ENCODE measurements at regions of chr11 and their contacts with region 1.

Region 1: DNA sequence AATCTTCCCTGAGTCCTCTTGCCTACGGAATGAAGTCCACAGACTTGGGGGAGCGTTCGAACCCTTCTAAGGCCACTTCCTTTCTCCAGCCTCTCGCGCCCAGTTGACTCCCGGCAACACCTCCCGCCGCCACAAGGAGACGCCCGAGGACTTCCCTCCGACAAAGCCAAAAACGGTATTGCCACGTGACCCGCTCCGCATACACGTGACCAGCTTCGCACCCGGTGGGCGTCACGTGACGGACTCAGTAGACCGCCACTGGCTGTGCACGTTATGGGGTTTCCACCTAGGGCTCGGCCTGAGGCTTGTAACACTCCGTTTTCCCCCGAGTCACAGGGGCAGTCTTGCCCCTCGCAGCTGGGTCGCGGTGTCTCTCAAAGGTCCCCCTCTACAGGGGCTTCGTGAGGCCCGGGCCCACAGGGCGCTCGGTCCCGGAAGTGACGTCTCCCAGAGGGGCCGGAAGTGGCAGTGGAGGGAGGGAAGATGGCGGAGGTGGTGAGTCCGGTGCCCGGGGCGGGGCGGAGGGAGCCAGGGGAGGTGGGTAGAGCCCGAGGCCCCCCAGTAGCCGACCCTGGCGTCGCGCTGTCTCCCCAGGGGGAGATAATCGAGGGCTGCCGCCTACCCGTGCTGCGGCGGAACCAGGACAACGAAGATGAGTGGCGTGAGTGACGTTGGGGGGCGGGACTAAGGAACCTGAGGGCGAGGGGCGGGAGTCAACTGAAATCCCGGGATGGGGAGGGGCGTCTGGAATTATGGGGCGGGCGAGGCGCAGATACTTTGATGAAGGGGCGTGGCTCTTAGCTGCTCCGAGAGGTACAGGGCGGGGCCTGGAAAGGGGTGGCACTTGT is at the start of gene KAT5:
- DNase-seq: peak; percentile 97 to 100 (median 99)

Region 2: GRCh38 chr11:65625628-65626342 is 86.2 kb before region 1 on chr11:
- intact Hi-C with region 1: loop called (anchors 5 kb)
- DNase-seq: peak in 8 of 10 donors; percentile 63 to 96 (median 76)

Region 3: DNA sequence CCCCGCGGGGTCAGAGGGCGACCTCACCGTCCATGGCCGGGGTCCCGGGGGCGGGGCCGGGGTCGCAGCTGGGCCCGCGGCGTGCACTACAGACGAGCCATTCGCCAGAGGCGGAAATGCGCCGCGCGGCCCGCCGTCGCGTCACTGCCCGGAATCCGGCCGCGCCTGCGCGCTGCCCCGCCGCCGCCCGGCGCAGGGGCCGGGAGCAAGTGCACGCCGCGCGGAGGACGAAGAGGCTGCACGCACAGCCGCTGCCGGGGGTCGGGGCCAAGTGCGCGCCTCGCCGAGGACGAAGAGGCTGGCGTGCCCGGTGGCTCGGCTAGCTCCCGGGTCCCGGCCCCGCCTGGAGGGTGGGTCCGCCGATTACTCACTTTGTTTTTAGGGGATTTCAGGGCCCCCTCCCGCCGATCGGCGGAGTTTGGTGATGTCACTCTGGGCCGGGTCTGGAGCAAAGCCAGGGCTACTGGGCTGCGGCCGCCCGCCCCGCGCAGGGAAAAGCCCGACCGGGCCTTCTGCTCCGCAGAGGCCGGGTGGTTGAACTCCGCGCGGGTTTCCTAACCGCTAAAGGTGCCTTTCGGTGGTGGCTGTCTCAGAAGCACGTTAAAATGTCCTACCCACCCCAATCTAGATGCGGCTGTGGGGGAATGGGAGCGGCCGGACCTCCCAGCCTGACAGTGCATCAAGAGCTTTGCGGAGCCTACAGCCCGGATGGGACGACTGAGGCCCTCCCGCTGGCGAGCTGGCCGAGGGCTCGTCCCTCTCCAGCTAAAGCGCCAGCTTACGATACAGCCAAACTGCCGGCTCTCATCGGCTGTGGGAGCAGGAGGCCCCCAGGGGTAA is 49.0 kb before region 1 on chr11 and contains the start of gene RELA:
- intact Hi-C with region 1: loop called (anchors 5 kb)
- DNase-seq: peak; percentile 92 to 99 (median 94)

Region 4: DNA sequence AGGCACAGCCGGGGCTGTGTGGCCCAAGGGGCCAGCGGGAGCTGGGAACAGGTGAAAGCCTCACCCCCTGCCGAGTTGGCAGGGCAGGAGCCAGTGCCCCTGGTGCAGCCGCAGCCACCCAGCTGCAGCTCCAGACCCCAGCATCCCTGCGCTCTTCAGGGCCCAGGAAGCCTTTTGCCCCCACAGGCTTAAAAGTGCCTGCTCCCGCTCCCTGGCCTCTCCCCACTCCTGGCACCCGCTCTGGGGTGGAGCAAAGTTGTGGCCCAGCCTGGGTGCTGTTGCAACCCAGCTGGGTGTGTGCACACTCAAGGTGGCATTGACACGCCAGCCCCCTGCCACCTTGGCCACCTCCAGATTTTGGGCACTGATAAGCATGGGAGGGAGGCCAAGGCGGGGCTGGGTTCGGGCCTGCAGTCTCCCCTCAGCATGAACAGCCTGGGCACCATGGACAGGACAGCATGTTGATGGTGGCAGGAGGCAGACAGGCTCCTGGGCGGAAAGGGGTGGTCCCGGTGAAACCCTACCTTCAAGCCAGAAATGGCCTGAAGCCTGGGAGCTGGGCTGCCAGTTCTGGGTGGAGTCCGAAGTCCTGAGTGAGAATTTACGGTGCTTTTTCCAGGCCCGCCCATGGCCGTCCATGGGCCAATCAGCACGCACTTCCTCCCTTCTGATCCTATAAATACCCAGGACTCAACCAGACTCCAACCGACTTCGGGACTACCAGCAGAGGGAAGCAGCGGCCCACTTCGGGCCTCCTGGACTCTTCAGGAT is 32.1 kb after region 1 on chr11:
- intact Hi-C with region 1: no loop called
- DNase-seq: no peak

Region 5: GRCh38 chr11:65817835-65818742 is 106.1 kb after region 1 on chr11:
- intact Hi-C with region 1: loop called (anchors 2 kb)
- DNase-seq: peak; percentile 84 to 99 (median 95)

Region 6: DNA sequence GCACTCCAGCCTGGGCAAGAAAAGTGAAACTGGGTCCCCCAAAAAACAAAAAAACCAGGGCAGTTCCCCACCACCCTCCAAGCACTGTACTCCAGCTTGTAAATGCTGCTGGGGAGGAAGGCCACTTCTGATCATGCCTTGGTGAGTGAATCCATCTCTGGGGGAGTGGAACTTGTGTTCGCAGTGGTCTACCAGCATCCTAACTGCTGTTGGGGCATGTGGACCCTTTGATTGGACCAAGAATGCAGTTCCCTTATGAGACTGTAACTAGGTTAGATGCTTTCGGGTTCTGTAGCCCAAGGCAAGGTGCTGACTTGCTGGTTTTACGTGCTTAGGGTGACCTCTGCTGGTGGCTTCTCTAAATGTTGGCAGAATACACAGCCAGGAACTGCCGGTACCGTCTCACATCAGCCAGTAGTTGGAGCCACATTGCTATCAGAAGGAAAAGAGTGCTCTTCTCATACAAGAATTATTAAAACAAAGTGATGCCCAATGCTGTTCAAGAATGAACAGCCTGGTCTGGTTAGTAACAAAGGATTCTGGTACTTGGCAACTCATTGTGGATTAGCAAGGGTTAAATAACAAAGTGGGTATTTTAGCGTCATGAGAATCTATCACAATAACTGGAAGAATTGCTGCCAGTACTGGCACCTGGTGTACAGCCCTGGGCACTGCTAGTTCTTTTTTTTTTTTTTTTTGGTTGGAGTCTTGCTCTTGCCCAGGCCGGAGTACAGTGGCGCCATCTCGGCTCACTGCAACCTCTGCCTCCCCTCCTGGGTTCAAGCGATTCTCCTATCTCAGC is 277.0 kb after region 1 on chr11:
- intact Hi-C with region 1: loop called (anchors 5 kb)
- DNase-seq: peak; percentile 62 to 97 (median 87)

Region 7: DNA sequence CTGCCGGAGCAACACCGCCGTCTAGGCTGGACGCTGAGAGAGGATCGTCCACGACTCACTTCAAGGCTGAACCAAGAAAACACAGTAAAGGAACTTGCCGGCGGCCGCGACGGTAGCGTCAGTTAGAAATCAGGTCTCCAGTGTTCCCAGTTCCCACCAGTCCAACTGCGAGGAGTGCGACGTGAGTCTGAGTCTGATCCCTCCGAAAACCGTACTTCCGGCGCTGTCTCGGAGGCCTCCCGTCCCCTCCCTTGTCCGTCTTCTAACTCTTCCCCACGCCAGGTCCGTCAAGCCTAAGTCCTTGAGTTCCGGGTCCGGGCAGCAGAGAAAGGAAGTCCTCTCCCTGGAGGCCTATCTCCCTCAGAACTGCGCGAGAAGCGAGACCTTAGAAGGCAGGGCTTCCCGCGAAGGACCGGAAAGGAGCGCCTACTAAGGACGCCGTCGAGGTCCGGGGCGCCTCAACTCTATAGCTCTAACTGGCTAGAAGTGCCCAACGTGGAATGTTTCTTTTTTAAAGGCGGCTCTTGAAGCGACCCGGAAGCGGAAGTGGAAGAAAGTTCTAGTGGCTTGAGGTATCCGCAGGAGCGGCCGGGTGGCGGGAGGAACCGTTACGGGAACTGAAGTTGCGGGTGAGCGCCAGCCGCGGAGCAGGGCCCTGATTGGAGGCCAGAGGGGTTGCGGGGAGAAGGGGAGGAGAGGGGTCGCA is 290.1 kb after region 1 on chr11 and contains the starts of genes BANF1 and EIF1AD:
- intact Hi-C with region 1: loop called (anchors 5 kb)
- DNase-seq: peak; percentile 88 to 98 (median 92)